ENCODE measurements at regions of chr2 and their contacts with region 1.

Region 1: DNA sequence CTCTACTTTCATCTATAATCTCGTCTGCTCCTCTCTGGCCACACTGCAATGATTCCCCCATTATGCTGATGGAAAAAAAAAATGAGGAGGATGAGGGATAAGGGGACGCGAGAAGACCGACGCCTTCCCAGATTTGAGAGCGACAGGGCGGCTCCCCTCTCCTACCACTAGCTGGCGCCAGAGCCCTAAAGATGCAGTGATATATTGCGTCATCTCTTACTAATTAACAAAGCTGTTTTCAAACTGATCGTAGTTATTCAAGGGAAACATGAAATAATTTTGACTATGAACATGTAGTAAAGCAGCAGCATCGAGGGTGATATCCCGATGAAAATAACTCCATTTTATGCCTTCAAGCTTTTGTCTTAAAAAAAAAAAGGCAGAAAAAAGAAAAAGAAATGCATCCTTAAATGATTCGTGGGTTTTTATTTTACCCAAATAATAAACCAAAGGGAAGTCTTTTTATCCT is 48.0 kb upstream of the HNRNPA3 start:
- DNase-seq: peak; percentile 85
- ATAC-seq: peak; percentile 40
- H3K4me3 Mint-ChIP-seq: no peak overlapping the region
- H3K27ac Mint-ChIP-seq: no peak overlapping the region
- H3K4me1 Mint-ChIP-seq: peaks cover 22% of the 10 kb centered on the region
- H3K27me3 Mint-ChIP-seq: no peaks in the 10 kb centered on the region
- CTCF ChIP-seq: peak; percentile 100

Region 2: DNA sequence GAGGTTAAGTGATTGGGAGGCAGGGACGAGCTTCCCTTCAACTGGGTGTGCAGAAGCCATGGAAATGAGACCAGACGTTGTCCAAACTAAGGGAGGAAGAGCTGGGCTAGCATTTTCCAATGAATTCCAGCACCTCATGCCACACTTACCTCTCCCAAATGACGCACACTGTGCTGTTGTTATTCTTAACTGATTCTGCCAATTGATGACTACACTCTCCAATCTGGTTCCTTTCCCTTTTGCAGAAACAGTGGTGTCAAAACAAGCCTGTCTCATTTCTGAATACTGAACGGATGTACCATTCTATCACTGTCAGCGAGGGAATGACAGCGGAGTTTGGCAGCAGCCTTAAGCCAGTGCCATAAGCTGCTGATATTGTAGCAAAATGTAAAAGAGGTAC is 332.5 kb before region 1 on chr2:
- CTCF ChIA-PET with region 1: no interaction called
- POLR2A ChIA-PET with region 1: no interaction called
- intact Hi-C with region 1: no loop called
- DNase-seq: no peak
- ATAC-seq: no peak
- H3K4me3 Mint-ChIP-seq: no peak overlapping the region
- H3K27ac Mint-ChIP-seq: no peak overlapping the region
- H3K4me1 Mint-ChIP-seq: peaks cover 13% of the 10 kb centered on the region
- H3K27me3 Mint-ChIP-seq: peaks cover 2% of the 10 kb centered on the region
- CTCF ChIP-seq: no peak

Region 3: DNA sequence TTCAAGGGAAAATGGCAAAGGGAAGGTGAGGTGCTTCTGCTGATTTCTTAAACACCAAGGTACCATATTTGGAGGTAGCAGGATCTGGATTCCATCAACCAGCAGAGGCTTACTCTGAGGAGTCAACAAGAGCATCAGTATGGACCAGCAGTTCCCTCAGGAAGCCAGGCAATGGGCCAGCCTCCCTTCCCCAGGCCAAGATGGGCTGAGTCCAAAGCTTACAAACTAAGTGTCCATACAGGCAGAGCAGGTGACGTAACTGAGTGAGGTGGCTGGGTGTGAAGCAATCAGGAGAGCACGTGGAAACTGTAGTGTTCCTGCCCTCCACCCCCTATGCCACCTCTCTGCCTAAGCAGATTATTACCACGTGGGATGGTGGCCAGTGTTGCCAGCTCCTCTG is 86.2 kb before region 1 on chr2:
- CTCF ChIA-PET with region 1: no interaction called
- POLR2A ChIA-PET with region 1: no interaction called
- intact Hi-C with region 1: no loop called
- DNase-seq: no peak
- ATAC-seq: no peak
- H3K4me3 Mint-ChIP-seq: no peak overlapping the region
- H3K27ac Mint-ChIP-seq: no peak overlapping the region
- H3K4me1 Mint-ChIP-seq: no peaks in the 10 kb centered on the region
- H3K27me3 Mint-ChIP-seq: peaks cover 3% of the 10 kb centered on the region
- CTCF ChIP-seq: no peak

Region 4: GRCh38 chr2:177201919-177202346 is 37.3 kb after region 1 on chr2:
- CTCF ChIA-PET with region 1: interaction called, 48 read pairs
- POLR2A ChIA-PET with region 1: interaction called, 4 read pairs
- intact Hi-C with region 1: no loop called
- DNase-seq: no peak
- ATAC-seq: no peak
- H3K4me3 Mint-ChIP-seq: no peak overlapping the region
- H3K27ac Mint-ChIP-seq: no peak overlapping the region
- H3K4me1 Mint-ChIP-seq: peaks cover 5% of the 10 kb centered on the region
- H3K27me3 Mint-ChIP-seq: no peaks in the 10 kb centered on the region
- CTCF ChIP-seq: no peak

Region 5: DNA sequence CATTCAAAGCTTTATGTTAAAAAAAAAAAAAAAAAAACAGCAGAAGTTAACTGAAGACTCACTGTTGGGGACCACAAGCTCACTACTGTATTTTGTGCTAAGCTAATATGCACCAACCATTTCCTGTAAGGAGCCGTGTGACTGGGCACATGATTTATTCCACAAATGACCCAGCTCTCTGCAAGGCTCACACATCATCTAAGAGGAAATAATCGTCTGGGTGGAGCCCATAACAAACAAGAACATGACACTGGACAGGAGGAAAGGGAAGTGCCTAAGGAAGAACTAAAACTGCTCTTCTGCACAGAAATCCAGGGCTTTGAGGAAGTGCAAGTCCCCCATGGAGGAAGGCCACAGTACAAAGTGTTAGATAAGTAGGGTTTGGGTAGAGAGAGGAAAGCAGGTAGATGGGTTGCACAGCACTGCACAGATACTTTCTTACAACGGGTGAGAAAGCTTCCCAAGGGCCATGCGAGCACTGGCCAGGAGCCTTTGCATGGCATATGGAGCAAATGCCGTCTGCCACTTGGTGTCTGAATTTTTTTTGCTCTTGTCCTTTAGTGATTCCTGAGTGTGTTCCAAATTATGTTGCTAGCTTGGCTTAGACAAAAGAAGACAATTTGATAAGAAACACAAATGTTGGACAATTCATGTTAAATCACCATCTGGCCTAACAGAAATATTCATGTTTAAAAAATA is 75.5 kb after region 1 on chr2:
- CTCF ChIA-PET with region 1: interaction called, 32 read pairs
- POLR2A ChIA-PET with region 1: interaction called, 4 read pairs
- intact Hi-C with region 1: no loop called
- DNase-seq: peak; percentile 54
- ATAC-seq: peak; percentile 87
- H3K4me3 Mint-ChIP-seq: no peak overlapping the region
- H3K27ac Mint-ChIP-seq: peak overlapping the region; percentile 87
- H3K4me1 Mint-ChIP-seq: peaks cover 70% of the 10 kb centered on the region
- H3K27me3 Mint-ChIP-seq: no peaks in the 10 kb centered on the region
- CTCF ChIP-seq: no peak

Region 6: DNA sequence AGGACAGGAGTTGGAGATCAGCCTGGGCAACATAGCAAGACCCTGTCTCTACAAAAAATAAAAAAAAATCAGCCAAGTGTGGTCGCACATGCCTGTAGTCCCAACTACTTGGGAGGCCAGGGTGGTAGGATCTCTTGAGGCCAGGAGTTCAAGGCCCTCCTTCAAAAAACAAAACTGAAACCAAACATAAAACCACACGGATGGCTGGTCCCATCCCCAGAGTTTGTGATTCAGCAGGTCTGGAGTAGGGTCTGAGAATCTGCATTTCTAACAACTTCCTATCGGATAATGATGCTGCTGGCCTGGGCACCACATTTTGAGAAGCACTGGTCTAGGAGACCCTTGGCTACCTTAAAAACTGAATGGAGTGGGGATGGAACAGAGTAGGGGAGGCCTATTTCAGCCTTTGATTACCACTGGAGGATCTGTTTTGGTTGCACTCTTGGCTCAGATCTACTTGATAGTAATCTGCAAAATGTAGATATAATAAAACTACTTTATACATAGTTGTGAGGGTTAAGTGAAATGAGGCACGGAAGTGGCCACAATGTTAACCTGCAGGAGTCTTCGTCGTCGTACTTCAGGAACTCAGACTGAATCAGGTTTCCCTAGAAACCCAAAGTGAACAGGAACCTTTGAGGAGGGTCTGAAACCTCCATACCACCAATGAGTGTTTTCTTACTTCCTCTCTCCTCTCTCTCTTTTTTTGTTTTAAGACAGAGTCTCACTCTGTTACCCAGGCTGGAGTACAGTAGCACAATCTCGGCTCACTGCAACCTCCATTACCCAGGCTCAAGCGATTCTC is 125.4 kb after region 1 on chr2:
- CTCF ChIA-PET with region 1: interaction called, 58 read pairs
- POLR2A ChIA-PET with region 1: no interaction called
- intact Hi-C with region 1: loop called (anchors 10 kb)
- DNase-seq: peak; percentile 35
- ATAC-seq: peak; percentile 75
- H3K4me3 Mint-ChIP-seq: peak overlapping the region; percentile 28
- H3K27ac Mint-ChIP-seq: peak overlapping the region; percentile 88
- H3K4me1 Mint-ChIP-seq: peaks cover 27% of the 10 kb centered on the region
- H3K27me3 Mint-ChIP-seq: no peaks in the 10 kb centered on the region
- CTCF ChIP-seq: no peak

Region 7: DNA sequence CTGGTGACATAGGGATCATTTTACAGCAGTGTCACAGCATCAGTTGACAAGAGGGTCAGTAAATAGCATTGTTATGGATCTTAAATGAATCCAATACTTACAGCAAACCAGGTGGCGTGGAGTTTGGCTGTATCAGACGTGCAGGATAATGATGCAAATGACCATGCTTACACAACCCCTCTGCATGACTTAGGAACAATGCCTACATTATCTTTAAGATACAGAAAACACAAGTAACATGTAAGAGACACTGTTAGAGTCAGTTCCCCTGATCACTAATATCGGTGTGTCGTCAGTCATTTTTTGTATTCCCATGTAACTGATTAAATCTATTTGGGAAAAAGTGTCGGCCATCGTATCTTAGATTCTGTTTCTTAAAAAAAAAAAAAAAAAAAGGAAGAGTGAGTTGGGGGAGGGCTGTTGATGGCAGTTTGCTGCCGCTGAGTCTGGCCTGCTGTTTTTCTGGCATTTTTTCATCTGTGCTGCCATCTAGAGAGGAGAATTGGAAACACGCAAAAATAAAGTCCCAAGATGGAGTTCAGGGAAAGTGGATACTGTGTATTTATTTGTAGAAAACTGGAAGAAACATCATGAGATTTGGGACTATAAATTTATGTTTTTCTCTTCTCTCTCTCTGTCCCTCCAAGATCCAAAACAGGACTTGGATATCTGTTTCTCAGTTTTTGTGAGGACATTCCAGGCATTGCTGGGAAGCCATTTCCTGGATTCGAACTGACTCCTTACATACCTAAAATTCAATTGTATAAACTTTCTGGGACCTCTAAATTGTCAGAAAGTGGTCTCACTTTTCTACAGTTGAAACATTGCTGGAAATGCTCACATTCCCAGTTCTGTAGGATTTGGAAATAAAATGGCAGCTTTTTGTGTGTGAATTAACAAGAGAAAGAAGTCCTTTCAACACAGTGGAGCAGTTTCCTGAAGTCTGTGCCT is 167.7 kb after region 1 on chr2:
- CTCF ChIA-PET with region 1: interaction called, 190 read pairs
- POLR2A ChIA-PET with region 1: no interaction called
- intact Hi-C with region 1: loop called (anchors 1 kb)
- DNase-seq: peak; percentile 51
- ATAC-seq: peak; percentile 92
- H3K4me3 Mint-ChIP-seq: no peak overlapping the region
- H3K27ac Mint-ChIP-seq: no peak overlapping the region
- H3K4me1 Mint-ChIP-seq: peaks cover 7% of the 10 kb centered on the region
- H3K27me3 Mint-ChIP-seq: no peaks in the 10 kb centered on the region
- CTCF ChIP-seq: peak; percentile 79

Region 8: GRCh38 chr2:177724398-177725287 is 560.0 kb after region 1 on chr2:
- CTCF ChIA-PET with region 1: interaction called, 12 read pairs
- POLR2A ChIA-PET with region 1: no interaction called
- intact Hi-C with region 1: loop called (anchors 10 kb)
- DNase-seq: peak; percentile 63
- ATAC-seq: peak; percentile 73
- H3K4me3 Mint-ChIP-seq: no peak overlapping the region
- H3K27ac Mint-ChIP-seq: no peak overlapping the region
- H3K4me1 Mint-ChIP-seq: no peaks in the 10 kb centered on the region
- H3K27me3 Mint-ChIP-seq: peaks cover 13% of the 10 kb centered on the region
- CTCF ChIP-seq: peak; percentile 92